ENCODE measurements at regions of chr12 and their contacts with region 1.

Region 1: DNA sequence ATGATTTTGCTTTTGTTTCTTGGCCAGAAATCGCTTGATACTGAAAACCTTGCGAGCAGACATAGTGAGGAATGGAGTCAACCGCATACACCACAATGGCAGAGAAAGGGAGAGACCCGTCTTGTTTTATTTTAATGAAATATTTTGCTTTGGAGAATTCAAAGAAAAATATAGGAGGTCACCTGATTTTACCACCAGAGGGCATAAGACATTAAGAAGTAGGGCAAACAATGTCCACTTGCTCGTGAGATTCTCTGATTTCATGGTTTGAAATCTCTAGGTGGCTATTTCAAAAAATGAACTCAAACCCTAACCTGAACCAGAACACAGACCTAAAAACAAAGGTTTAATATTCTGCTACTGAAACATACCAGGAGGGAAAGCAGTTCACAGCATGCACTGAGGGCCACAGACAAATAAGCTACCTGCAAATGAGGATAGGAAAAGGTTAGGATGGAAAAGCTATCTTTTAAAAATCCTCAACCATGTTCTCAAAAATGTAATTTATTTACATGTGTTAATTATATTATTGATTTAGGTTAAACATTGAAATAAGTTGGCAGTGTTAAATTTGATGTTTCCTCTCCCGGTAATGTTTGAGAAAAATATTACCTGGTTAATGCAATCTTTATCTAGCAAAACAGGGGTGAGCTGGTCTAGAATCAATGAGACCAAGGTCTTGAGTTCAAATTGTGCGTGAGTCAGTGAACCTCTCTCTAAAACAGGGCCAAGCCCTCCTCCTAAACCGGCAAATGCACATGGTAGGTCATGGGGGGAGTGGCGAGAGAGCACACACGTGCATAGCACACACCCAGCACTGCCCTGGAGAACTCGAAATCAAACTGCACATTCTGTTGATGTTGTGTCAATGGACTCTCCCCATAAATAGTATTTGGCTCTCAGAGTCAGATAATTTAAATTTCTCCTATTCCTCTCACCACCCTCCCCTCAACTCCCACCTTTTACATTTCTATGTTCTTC is 12.5 kb downstream of the IFNG-AS1 start:
- DNase-seq: no peak
- H3K4me3 Mint-ChIP-seq: no peak overlapping the region
- H3K27ac Mint-ChIP-seq: no peak overlapping the region
- H3K4me1 Mint-ChIP-seq: peaks cover 13% of the 10 kb centered on the region
- H3K27me3 Mint-ChIP-seq: no peaks in the 10 kb centered on the region

Region 2: DNA sequence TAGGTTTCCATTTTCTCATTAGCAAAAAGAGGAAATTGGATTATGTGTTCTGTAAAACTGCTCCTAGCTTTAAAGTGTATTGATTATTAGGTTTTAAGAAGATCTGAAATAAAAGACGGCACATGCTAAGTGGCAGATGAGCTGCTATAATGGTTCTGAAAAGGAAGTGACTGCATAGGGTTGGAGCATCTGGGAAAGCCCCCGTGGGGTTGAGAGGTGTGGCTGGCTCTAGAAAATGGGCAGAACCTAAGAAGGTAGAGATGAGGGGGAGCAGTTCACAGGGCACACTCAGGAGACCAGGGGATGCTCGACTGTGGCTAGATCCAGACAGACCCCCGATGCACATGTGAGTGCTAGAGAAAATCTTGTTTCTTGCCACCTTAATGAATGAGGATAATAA is 10.6 kb before region 1 on chr12:
- CTCF ChIA-PET with region 1: interaction called, 8 read pairs
- intact Hi-C with region 1: loop called (anchors 1 kb)
- DNase-seq: peak; percentile 74
- H3K4me3 Mint-ChIP-seq: peak overlapping the region; percentile 55
- H3K27ac Mint-ChIP-seq: peak overlapping the region; percentile 80
- H3K4me1 Mint-ChIP-seq: peaks cover 49% of the 10 kb centered on the region
- H3K27me3 Mint-ChIP-seq: peaks cover 2% of the 10 kb centered on the region

Region 3: GRCh38 chr12:68031881-68032739 is 30.3 kb after region 1 on chr12:
- CTCF ChIA-PET with region 1: interaction called, 3 read pairs
- intact Hi-C with region 1: loop called (anchors 2 kb)
- DNase-seq: no peak
- H3K4me3 Mint-ChIP-seq: peak overlapping the region; percentile 28
- H3K27ac Mint-ChIP-seq: peak overlapping the region; percentile 67
- H3K4me1 Mint-ChIP-seq: peaks cover 20% of the 10 kb centered on the region
- H3K27me3 Mint-ChIP-seq: no peaks in the 10 kb centered on the region